ENCODE measurements at regions of chr4 and their contacts with region 1.

Region 1: DNA sequence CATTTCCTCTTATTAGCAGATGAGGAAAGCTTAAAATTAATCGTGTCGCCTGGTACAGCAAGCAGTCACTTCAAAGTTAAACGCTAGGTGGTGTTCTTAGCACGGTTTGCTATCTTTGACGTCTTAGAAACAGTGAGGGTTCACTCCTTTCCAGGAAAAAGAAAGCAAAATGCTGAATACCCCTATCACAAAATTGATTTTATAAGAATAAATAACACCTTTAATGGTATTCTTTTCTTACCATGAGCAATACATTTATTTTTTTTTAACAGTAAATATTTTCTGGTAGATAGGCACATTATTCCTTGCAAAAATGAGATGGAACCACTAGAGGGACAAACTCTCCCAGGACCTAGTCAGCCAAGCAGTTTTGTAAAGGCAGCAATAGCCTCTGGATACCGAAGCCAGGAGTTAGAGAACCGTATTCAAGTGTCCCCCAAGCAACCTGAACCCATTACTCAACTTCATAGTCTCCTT is 153.9 kb downstream of the KDR start:
- DNase-seq: no peak
- H3K4me3 ChIP-seq: no peak overlapping the region
- H3K27ac ChIP-seq: no peak overlapping the region
- H3K4me1 ChIP-seq: no peaks in the 10 kb centered on the region
- H3K27me3 ChIP-seq: no peaks in the 10 kb centered on the region
- CTCF ChIP-seq: peak; percentile 27 to 49 (median 36)
- EP300 ChIP-seq: no peak
- POLR2A ChIP-seq: no peak

Region 2: GRCh38 chr4:55143863-55144262 is 172.4 kb after region 1 on chr4:
- intact Hi-C with region 1: no loop called
- DNase-seq: no peak
- H3K4me3 ChIP-seq: no peak overlapping the region
- H3K27ac ChIP-seq: no peak overlapping the region
- H3K4me1 ChIP-seq: no peaks in the 10 kb centered on the region
- H3K27me3 ChIP-seq: no peaks in the 10 kb centered on the region
- CTCF ChIP-seq: no peak
- EP300 ChIP-seq: no peak
- POLR2A ChIP-seq: no peak

Region 3: GRCh38 chr4:55554453-55555030 is 583.0 kb after region 1 on chr4:
- intact Hi-C with region 1: loop called in 1 of 4 experiments (anchors 10 kb)
- DNase-seq: no peak
- H3K4me3 ChIP-seq: no peak overlapping the region
- H3K27ac ChIP-seq: no peak overlapping the region
- H3K4me1 ChIP-seq: no peaks in the 10 kb centered on the region
- H3K27me3 ChIP-seq: no peaks in the 10 kb centered on the region
- CTCF ChIP-seq: peak; percentile 13 to 37 (median 28)
- EP300 ChIP-seq: no peak
- POLR2A ChIP-seq: no peak

Region 4: DNA sequence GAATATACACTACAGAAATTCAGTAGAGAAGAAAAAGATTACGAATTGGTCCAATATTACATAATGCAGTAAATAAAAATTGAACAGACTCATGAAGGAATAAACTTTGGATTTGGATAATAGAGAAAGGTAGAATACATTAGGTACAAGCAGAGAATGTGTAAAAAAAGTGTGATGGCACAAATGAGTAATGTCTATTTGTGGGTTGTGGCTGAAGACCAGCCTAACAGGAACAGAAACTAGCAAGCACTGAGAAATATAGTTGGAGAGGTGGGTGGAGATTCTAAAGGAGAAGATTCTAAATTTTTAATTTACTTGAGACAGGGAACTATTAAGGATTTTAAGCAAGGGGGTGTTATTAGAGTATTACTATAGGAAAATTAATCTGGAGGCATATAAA is 590.4 kb after region 1 on chr4:
- intact Hi-C with region 1: loop called in 2 of 4 experiments (anchors 10 kb)
- DNase-seq: no peak
- H3K4me3 ChIP-seq: no peak overlapping the region
- H3K27ac ChIP-seq: no peak overlapping the region
- H3K4me1 ChIP-seq: no peaks in the 10 kb centered on the region
- H3K27me3 ChIP-seq: no peaks in the 10 kb centered on the region
- CTCF ChIP-seq: no peak
- EP300 ChIP-seq: no peak
- POLR2A ChIP-seq: no peak

Measured in ovary (tissue), 10 donors.